Activated naive CD4-positive, alpha-beta T cell treated with anti-CD3 and anti-CD28 coated beads for 36 hours (primary cell): ENCODE measurements at regions of chr17 and their contacts with region 1.

Region 1: DNA sequence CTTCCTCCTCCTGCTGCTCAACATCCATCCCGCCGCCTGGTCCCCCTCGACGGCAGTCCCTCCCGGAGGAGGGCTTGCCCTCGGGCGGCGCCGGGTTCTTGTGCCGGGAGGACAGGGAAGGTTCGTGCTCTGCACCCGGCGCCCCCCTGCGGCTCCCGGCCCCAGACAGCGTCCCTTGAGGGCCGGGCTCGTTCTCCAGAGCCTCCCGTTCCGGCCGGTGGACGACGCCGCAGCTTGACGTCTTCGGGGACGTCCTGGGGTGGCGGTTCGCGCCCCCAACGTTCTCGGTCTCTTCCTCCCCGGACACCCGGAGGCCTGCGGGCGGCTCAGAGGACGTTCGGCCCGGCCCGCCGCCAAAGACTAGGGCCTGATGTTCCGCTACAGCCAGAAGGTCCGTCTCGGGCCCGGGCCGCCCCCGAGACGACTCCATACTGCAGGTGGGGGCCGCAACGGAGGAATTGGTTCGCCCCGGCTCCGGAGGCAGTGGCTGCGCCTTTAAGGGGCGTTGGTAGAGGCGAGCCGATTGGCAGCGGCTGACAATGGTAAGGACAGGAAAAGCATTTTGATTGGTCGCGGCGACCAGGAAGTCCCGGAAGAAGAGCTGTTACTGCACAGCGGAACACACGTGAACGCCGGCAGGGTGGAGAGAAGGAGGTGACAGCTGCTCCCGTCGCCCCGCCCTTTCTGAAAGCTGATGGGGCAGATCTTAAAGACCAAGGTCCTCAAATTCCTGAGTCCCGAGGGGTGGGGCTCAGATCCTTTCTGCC is at the start of gene BORCS6:
- DNase-seq: peak; percentile 98
- H3K4me3 Mint-ChIP-seq: no peak within 1 kb of the TSS
- H3K27ac Mint-ChIP-seq: peak within 1 kb of the TSS; percentile 82
- H3K4me1 Mint-ChIP-seq: peaks cover 7% of the 10 kb centered on the region
- H3K27me3 Mint-ChIP-seq: no peaks in the 10 kb centered on the region
- total RNA-seq, gene BORCS6: 4.0 to 4.3 TPM

Region 2: GRCh38 chr17:7887482-7888183 is 302.3 kb before region 1 on chr17:
- CTCF ChIA-PET with region 1: no interaction called
- intact Hi-C with region 1: loop called (anchors 5 kb)
- DNase-seq: peak; percentile 96
- H3K4me3 Mint-ChIP-seq: no peak overlapping the region
- H3K27ac Mint-ChIP-seq: no peak overlapping the region
- H3K4me1 Mint-ChIP-seq: peaks cover 5% of the 10 kb centered on the region
- H3K27me3 Mint-ChIP-seq: no peaks in the 10 kb centered on the region

Region 3: DNA sequence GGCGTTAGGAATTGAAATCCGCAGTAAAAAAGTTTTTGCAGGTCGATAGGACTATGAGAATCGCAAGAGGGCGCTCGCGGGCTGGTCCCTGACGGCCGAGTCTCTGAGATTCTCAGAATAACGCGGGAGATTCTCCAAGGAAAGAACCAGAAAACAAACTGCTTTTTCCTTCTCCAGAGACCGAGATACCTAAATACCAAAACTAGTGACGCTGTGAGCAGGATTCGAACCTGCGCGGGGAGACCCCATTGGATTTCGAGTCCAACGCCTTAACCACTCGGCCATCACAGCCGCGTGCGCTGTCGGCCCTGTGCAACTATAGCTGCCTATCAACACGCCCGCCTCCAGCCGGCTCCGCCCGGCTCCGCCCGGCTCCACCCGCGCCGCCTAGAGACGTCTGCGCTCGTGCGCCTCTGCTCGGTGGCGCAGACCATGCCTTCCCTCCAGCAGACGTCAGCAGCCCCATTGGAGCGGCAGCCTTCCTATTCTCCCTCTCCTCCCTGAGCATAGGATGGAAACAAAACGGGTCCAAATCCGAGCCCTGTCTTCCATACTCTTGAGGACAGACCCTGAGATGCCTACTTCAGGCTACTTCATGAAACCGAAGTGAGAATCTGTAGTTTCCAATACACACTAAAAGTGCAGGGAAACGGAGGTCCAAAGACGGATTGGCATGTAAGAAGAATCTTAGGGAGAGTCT is 51.1 kb before region 1 on chr17:
- CTCF ChIA-PET with region 1: interaction called, 8 read pairs
- intact Hi-C with region 1: loop called (anchors 1 kb)
- DNase-seq: peak; percentile 98
- H3K4me3 Mint-ChIP-seq: no peak overlapping the region
- H3K27ac Mint-ChIP-seq: no peak overlapping the region
- H3K4me1 Mint-ChIP-seq: peaks cover 13% of the 10 kb centered on the region
- H3K27me3 Mint-ChIP-seq: no peaks in the 10 kb centered on the region

Region 4: DNA sequence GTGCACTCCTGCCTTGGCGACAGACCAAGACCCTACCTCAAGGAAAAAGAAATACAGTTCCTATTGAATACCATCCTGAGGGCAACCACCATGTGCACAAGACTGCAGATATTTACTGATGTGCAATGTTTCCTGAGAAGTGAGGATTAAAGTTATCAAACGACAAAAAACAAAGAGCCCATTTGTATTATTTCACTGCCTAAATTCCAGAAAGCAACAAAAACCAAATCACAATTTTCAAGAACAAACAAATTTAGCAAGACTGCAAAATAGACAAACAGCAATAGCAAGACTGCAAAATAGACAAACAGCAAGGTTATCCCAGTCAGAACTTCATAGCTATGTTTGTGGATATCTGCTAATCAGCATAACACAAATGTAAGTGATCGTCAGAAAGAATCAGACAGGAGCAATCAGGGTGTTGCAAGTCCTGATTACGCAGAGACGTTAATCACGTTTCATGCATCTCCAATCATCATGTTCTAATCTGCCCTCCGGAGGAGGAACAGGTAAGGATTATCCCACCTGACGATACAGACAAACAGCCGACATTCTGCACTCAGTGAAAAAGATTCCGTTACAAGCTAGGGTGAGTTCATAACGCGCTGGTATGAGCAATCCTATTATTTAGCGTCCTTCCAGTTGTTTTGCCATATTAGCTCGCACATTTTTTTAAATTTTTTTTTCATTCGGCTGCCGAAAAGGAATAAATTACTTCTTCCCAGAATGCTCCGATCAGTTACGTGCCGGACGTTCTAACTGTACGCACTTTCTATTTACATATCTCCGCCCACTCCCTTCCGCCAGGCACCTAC is 16.6 kb before region 1 on chr17:
- CTCF ChIA-PET with region 1: interaction called, 3 read pairs
- intact Hi-C with region 1: loop called (anchors 1 kb)
- DNase-seq: peak; percentile 90
- H3K4me3 Mint-ChIP-seq: peak overlapping the region; percentile 69
- H3K27ac Mint-ChIP-seq: peak overlapping the region; percentile 100
- H3K4me1 Mint-ChIP-seq: peaks cover 40% of the 10 kb centered on the region
- H3K27me3 Mint-ChIP-seq: peaks cover 4% of the 10 kb centered on the region

Region 5: GRCh38 chr17:8209909-8210760 is 20.2 kb after region 1 on chr17 and contains the start of gene AURKB:
- CTCF ChIA-PET with region 1: interaction called, 5 read pairs
- intact Hi-C with region 1: loop called (anchors 1 kb)
- DNase-seq: peak; percentile 98
- H3K4me3 Mint-ChIP-seq: peak within 1 kb of the TSS; percentile 99
- H3K27ac Mint-ChIP-seq: peak within 1 kb of the TSS; percentile 94
- H3K4me1 Mint-ChIP-seq: peaks cover 16% of the 10 kb centered on the region
- H3K27me3 Mint-ChIP-seq: no peaks in the 10 kb centered on the region
- total RNA-seq, gene AURKB: 243 TPM

Region 6: DNA sequence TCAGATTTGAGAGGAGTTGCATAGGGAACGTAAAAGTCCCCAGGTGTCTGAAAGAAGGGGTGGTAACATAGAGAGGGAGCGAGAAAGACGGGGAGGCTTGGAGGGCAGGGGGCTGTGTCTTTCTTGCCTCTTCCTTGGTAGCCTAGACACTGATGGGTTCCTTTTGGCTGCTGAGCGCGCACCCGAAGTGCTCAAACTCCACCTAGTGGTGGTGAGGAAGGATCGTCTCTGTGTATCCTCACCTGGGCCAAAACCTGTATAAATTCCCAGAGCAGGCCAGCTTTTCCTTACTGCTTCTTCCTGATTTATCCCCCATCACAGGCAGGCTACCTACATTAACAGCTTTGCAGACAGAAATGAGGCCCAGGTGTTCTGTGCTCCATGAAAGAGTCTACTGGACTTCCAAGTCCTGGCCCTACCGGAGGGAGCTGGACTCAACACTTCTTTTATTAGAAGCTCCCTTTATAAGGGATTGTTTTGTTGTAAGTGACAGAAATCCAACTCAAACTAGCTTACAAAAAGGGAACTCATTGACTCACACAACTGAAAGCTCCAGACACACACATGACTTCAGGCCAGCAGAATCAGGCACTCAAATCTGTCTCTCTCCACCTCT is 110.8 kb after region 1 on chr17:
- CTCF ChIA-PET with region 1: interaction called, 5 read pairs
- intact Hi-C with region 1: loop called (anchors 1 kb)
- DNase-seq: peak; percentile 67
- H3K4me3 Mint-ChIP-seq: no peak overlapping the region
- H3K27ac Mint-ChIP-seq: no peak overlapping the region
- H3K4me1 Mint-ChIP-seq: peaks cover 7% of the 10 kb centered on the region
- H3K27me3 Mint-ChIP-seq: no peaks in the 10 kb centered on the region